Dorsolateral prefrontal cortex (tissue), 120 donors: ENCODE measurements at regions of chr3 and their contacts with region 1.

Region 1: GRCh38 chr3:46378426-46378942 is 7.7 kb downstream of the CCR5 start:
- DNase-seq: peak in 9 of 10 donors; percentile 20 to 80 (median 63)
- H3K4me3 ChIP-seq: no peak overlapping the region
- H3K27ac ChIP-seq: no peak overlapping the region
- H3K27me3 ChIP-seq: peaks cover 0 to 8% (median 0%) of the 10 kb centered on the region in 45 donors
- CTCF ChIP-seq: peak in 55 of 56 donors; percentile 26 to 80 (median 63)

Region 2: GRCh38 chr3:45938864-45939263 is 439.6 kb before region 1 on chr3:
- intact Hi-C with region 1: loop called (anchors 5 to 10 kb)
- DNase-seq: peak; percentile 70 to 97 (median 88)
- H3K4me3 ChIP-seq: no peak overlapping the region
- H3K27ac ChIP-seq: peak overlapping the region in 41 of 59 donors; percentile 3 to 85 (median 51)
- H3K27me3 ChIP-seq: no peaks in the 10 kb centered on the region
- CTCF ChIP-seq: peak; percentile 77 to 98 (median 92)

Region 3: GRCh38 chr3:45995236-45996192 is 383.0 kb before region 1 on chr3 and contains the start of gene FYCO1:
- intact Hi-C with region 1: no loop called
- DNase-seq: peak; percentile 79 to 95 (median 93)
- H3K4me3 ChIP-seq: peak within 1 kb of the TSS; percentile 69 to 98 (median 89)
- H3K27ac ChIP-seq: peak within 1 kb of the TSS in 57 of 59 donors; percentile 4 to 91 (median 73)
- H3K27me3 ChIP-seq: no peaks in the 10 kb centered on the region
- CTCF ChIP-seq: peak in 18 of 56 donors; percentile 5 to 37 (median 20)
- total RNA-seq, gene FYCO1: 7.9 to 24.8 (median 13.3) TPM

Region 4: GRCh38 chr3:46089237-46090011 is 289.1 kb before region 1 on chr3:
- intact Hi-C with region 1: loop called (anchors 5 kb)
- DNase-seq: peak in 7 of 10 donors; percentile 32 to 60 (median 55)
- H3K4me3 ChIP-seq: no peak overlapping the region
- H3K27ac ChIP-seq: peak overlapping the region in 9 of 59 donors; percentile 9 to 69 (median 29)
- H3K27me3 ChIP-seq: no peaks in the 10 kb centered on the region
- CTCF ChIP-seq: no peak

Region 5: DNA sequence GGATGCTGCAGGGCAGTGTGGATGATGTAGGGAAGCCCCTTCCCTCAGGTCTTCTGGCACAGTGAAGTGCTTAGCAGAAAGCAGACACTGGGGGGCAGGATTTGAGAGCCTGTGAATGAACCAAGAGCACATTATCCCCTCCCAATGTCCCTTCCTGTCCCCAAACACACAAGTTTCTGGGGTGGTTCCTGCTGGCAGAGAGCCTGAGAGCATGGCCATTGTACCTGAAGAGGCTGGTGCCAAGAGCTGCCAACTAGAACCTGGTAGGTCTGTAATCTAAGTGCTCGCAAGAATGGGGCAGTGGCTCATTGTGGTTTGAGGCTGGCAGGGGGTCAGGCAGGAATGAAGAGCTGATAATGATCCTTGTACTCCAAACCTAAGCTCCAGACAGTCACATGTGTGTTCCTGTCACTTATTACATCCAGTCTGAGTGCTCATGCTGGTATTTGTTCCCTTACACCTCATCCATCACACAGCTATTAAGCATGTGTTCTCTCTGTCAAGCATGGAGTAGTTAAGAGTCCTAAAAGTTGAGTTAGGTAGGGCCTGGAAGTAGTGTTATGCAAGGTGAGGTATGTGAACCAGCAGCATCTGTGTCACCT is 163.6 kb before region 1 on chr3:
- intact Hi-C with region 1: loop called in 1 of 2 experiments (anchors 10 kb)
- DNase-seq: no peak
- H3K4me3 ChIP-seq: no peak overlapping the region
- H3K27ac ChIP-seq: no peak overlapping the region
- H3K27me3 ChIP-seq: peaks cover 0 to 14% (median 0%) of the 10 kb centered on the region in 45 donors
- CTCF ChIP-seq: peak in 19 of 56 donors; percentile 11 to 35 (median 20)

Region 6: DNA sequence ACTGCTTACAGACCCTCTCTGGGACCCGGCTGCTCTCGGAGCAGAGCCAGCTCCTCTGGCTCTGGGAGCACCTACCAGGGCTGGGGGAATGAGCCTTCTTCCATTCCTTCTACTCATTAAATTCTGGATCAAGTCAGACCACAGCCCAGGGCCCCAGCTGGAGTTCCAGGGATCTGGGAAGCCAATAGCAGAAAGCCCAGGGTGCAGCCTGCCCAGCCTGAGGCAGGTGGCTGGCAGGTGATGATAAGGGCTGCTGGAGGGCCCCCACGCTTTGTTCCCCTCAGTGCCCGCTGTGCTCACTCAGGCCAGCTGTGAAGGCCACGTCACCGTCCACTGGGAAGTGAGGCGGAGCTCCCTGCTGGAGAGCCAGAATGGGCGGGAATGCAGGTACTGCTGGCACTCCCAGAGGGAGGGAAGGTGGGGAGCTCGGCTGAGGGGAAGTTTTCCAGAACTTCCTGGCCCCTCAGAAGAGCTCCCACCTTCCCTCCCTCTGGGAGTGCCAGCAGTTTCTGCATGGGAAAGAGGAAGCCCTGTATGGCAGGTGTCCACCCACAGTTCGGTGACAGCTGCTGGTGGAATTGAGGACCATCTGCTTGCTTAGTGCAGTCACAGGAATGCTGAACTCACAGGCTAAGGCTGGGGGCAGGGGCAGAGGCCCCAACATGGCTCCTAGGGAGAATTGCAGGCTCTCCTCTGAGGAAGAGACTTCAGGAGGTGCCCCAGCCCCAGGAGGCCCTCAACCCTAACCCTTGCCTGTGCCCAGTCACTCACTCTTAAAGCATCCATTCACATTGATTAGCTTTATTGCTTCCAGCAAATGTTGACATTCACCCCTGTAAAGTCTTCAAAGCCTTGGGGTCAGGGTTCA is 106.7 kb after region 1 on chr3:
- intact Hi-C with region 1: no loop called
- DNase-seq: peak in 1 of 10 donors; percentile 32
- H3K4me3 ChIP-seq: no peak overlapping the region
- H3K27ac ChIP-seq: no peak overlapping the region
- H3K27me3 ChIP-seq: no peaks in the 10 kb centered on the region
- CTCF ChIP-seq: no peak